K562 (cell line): ENCODE measurements at regions of chr1 and their contacts with region 1.

Region 1: GRCh38 chr1:25462732-25463131 is 32.0 kb downstream of the MACO1 start:
- DNase-seq: no peak
- ATAC-seq: peak; percentile 24
- H3K4me3 ChIP-seq: no peak overlapping the region
- H3K27ac ChIP-seq: no peak overlapping the region
- H3K4me1 ChIP-seq: peaks cover 4 to 17% of the 10 kb centered on the region in 2 experiments; a peak in 4 of 5 replicates
- H3K27me3 ChIP-seq: no peaks in the 10 kb centered on the region
- CTCF ChIP-seq: no peak
- EP300 ChIP-seq: no peak
- POLR2A ChIP-seq: no peak
- RAD21 ChIP-seq: no peak

Region 2: DNA sequence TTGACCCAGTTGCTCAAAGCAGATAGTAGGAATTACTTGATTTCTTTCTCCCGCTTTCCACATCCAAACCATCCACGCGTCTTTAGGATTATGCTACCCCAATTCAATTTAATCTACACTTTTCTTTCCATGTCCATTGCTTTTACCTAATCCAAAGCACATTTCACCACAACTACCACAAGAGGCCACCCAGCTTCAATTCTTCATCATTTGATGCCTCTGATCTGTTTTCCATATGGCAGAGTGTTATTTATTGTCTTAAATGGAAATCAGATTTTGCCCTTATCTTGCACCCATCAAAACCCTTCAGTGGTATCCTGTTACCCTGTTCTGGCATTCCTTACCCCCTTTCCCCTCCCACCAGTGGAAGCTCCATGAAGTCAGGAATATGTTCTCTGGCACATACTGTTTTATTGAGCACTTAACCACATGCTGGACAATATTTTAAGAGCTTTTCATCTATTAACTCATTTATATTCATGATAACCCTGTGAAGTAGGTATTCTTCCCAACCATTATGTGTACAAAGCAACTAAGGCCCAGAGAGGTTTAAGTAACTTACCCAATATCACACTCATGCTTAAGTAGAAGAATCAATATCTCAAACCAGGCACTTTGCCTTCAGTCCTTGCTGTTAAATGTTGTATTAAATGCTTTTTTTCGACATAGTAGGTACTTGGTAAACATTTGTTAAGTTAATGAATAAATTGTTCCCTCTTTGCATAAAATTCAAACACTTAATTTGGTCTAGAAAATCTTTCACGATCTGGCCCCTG is 682.9 kb before region 1 on chr1:
- CTCF ChIA-PET with region 1: no interaction called
- POLR2A ChIA-PET with region 1: no interaction called
- in situ Hi-C with region 1: no loop called
- intact Hi-C with region 1: no loop called
- DNase-seq: no peak
- ATAC-seq: no peak
- H3K4me3 ChIP-seq: no peak overlapping the region
- H3K27ac ChIP-seq: no peak overlapping the region
- H3K4me1 ChIP-seq: no peaks in the 10 kb centered on the region
- H3K27me3 ChIP-seq: no peaks in the 10 kb centered on the region
- CTCF ChIP-seq: 0 out of 6 replicates have a peak, but pooled peaks of 1 of the 3 experiments have one; percentile 1
- EP300 ChIP-seq: no peak
- POLR2A ChIP-seq: no peak
- RAD21 ChIP-seq: no peak

Region 3: GRCh38 chr1:25476186-25477097 is 13.7 kb after region 1 on chr1:
- CTCF ChIA-PET with region 1: no interaction called
- POLR2A ChIA-PET with region 1: interaction called, 10 read pairs
- in situ Hi-C with region 1: no loop called
- intact Hi-C with region 1: no loop called
- DNase-seq: peak in 1 of 4 experiments; percentile 38
- ATAC-seq: peak; percentile 31
- H3K4me3 ChIP-seq: no peak overlapping the region
- H3K27ac ChIP-seq: no peak overlapping the region
- H3K4me1 ChIP-seq: peaks cover 10 to 39% of the 10 kb centered on the region in 2 experiments
- H3K27me3 ChIP-seq: no peaks in the 10 kb centered on the region
- CTCF ChIP-seq: no peak
- EP300 ChIP-seq: no peak
- POLR2A ChIP-seq: no peak
- RAD21 ChIP-seq: no peak